Activated T-helper 1 cell treated with anti-CD3 and anti-CD28 coated beads, Interleukin-12 subunit alpha, Interleukin-12 subunit beta, Interleukin-2, Interleukin-4 antibody, amounts not matched to agents 30 ng/mL and 10 ng/mL and 1 ng/mL, durations not matched to agents 14 hours and 24 hours and 36 hours (primary cell): ENCODE measurements at regions of chr6 and their contacts with region 1.

Region 1: GRCh38 chr6:110537208-110538123 is 61.1 kb upstream of the SLC22A16 start:
- DNase-seq: no peak
- H3K4me3 Mint-ChIP-seq: peak overlapping the region; percentile 34
- H3K27ac Mint-ChIP-seq: peak overlapping the region; percentile 36
- H3K4me1 Mint-ChIP-seq: peaks cover 20% of the 10 kb centered on the region
- H3K27me3 Mint-ChIP-seq: peaks cover 16% of the 10 kb centered on the region

Region 2: DNA sequence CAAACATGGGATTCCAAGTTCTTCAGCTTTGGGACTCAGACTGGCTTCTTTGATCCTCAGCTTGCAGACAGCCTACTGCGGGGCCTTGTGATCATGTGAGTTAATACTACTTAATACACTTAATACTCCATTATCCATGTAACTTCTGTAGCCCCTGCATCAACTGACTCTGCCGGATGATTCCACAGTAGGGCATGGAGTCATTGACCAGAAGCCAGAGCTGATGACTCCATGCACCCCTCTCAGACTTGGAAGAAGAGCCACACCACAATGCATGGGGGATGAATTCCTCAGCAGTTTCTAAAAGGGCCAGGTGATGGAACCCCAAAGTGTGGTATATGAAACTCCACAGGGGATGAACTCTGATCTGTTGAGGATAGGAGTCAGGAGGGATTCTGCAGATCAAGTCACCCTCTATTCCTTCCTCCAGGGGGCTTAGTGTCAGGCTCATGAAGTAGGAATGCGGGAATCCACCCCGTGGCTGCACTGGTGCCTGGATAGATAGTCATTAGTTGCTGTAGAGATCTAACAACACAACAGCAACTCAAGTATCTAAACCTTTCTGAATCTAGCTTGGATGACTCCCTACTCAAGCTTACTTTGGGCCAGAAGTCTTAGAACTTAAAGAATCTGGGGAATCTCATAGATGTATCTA is 489.1 kb before region 1 on chr6:
- intact Hi-C with region 1: no loop called
- DNase-seq: no peak
- H3K4me3 Mint-ChIP-seq: no peak overlapping the region
- H3K27ac Mint-ChIP-seq: no peak overlapping the region
- H3K4me1 Mint-ChIP-seq: no peaks in the 10 kb centered on the region
- H3K27me3 Mint-ChIP-seq: peaks cover 9% of the 10 kb centered on the region

Region 3: DNA sequence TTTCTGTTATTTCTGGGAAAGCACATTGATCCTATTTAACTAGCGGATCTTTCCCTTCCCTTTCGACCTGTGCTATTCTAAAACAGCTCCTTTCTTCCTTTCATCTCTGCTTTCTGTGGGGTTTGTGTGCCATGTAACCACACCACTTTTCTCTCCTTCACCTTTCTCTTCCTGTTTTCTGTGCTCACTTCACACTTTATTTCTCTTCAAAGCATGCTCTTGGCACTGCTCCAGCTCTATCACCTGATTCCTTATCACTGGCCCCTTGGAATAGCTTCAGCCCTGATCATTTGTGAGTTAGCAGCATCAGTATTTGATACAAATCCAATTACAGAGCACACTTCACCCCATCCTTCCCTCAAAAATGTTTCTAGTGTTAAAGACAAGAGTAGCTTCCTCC is 171.2 kb before region 1 on chr6:
- intact Hi-C with region 1: no loop called
- DNase-seq: no peak
- H3K4me3 Mint-ChIP-seq: no peak overlapping the region
- H3K27ac Mint-ChIP-seq: no peak overlapping the region
- H3K4me1 Mint-ChIP-seq: no peaks in the 10 kb centered on the region
- H3K27me3 Mint-ChIP-seq: peaks cover 17% of the 10 kb centered on the region

Region 4: GRCh38 chr6:110456694-110457093 is 80.8 kb before region 1 on chr6:
- intact Hi-C with region 1: no loop called
- DNase-seq: no peak
- H3K4me3 Mint-ChIP-seq: no peak overlapping the region
- H3K27ac Mint-ChIP-seq: no peak overlapping the region
- H3K4me1 Mint-ChIP-seq: no peaks in the 10 kb centered on the region
- H3K27me3 Mint-ChIP-seq: peaks cover 2% of the 10 kb centered on the region

Region 5: GRCh38 chr6:110506177-110506576 is 31.3 kb before region 1 on chr6:
- intact Hi-C with region 1: no loop called
- DNase-seq: no peak
- H3K4me3 Mint-ChIP-seq: no peak overlapping the region
- H3K27ac Mint-ChIP-seq: no peak overlapping the region
- H3K4me1 Mint-ChIP-seq: no peaks in the 10 kb centered on the region
- H3K27me3 Mint-ChIP-seq: peaks cover 8% of the 10 kb centered on the region

Region 6: GRCh38 chr6:110589865-110590513 is 52.5 kb after region 1 on chr6:
- intact Hi-C with region 1: loop called (anchors 2 kb)
- DNase-seq: no peak
- H3K4me3 Mint-ChIP-seq: no peak overlapping the region
- H3K27ac Mint-ChIP-seq: no peak overlapping the region
- H3K4me1 Mint-ChIP-seq: peaks cover 14% of the 10 kb centered on the region
- H3K27me3 Mint-ChIP-seq: peaks cover 7% of the 10 kb centered on the region